Caco-2 (cell line): ENCODE measurements at regions of chr11 and their contacts with region 1.

Region 1: DNA sequence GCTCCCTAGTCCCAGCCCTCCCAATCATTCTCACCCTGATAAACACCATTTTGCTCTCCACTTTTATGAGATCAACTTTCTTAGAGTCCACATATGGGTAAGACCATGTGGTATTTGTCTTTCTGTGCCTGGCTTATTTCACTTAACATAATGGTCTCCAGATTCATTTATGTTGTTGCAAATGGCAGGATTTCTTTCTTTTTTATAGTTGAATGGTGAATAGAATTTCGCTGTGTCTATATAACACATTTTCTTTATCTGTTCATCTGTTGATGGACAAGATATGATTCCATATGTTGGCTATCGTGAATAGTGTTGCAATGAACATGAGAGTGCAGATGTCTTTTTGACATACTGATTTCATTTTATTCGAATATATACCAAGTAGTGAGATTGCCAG is 367.4 kb upstream of the ARHGAP42 start:
- DNase-seq: no peak
- H3K4me3 ChIP-seq: no peak overlapping the region
- H3K4me3 Mint-ChIP-seq: no peak overlapping the region
- H3K27ac Mint-ChIP-seq: no peak overlapping the region
- H3K4me1 ChIP-seq: no peaks in the 10 kb centered on the region
- H3K4me1 Mint-ChIP-seq: no peaks in the 10 kb centered on the region
- H3K27me3 ChIP-seq: no peaks in the 10 kb centered on the region
- H3K27me3 Mint-ChIP-seq: no peaks in the 10 kb centered on the region
- CTCF ChIP-seq: no peak

Region 2: GRCh38 chr11:100203789-100204188 is 115.9 kb before region 1 on chr11:
- CTCF ChIA-PET with region 1: no interaction called
- POLR2A ChIA-PET with region 1: no interaction called
- intact Hi-C with region 1: no loop called
- DNase-seq: no peak
- H3K4me3 ChIP-seq: no peak overlapping the region
- H3K4me3 Mint-ChIP-seq: no peak overlapping the region
- H3K27ac Mint-ChIP-seq: no peak overlapping the region
- H3K4me1 ChIP-seq: no peaks in the 10 kb centered on the region
- H3K4me1 Mint-ChIP-seq: peaks cover 5% of the 10 kb centered on the region
- H3K27me3 ChIP-seq: no peaks in the 10 kb centered on the region
- H3K27me3 Mint-ChIP-seq: peaks cover 5% of the 10 kb centered on the region
- CTCF ChIP-seq: no peak

Region 3: GRCh38 chr11:100367892-100368291 is 48.2 kb after region 1 on chr11:
- CTCF ChIA-PET with region 1: no interaction called
- POLR2A ChIA-PET with region 1: no interaction called
- intact Hi-C with region 1: loop called (anchors 5 kb)
- DNase-seq: no peak
- H3K4me3 ChIP-seq: no peak overlapping the region
- H3K4me3 Mint-ChIP-seq: no peak overlapping the region
- H3K27ac Mint-ChIP-seq: no peak overlapping the region
- H3K4me1 ChIP-seq: no peaks in the 10 kb centered on the region
- H3K4me1 Mint-ChIP-seq: no peaks in the 10 kb centered on the region
- H3K27me3 ChIP-seq: no peaks in the 10 kb centered on the region
- H3K27me3 Mint-ChIP-seq: no peaks in the 10 kb centered on the region
- CTCF ChIP-seq: no peak

Region 4: GRCh38 chr11:100501450-100501849 is 181.8 kb after region 1 on chr11:
- CTCF ChIA-PET with region 1: no interaction called
- POLR2A ChIA-PET with region 1: no interaction called
- intact Hi-C with region 1: no loop called
- DNase-seq: no peak
- H3K4me3 ChIP-seq: no peak overlapping the region
- H3K4me3 Mint-ChIP-seq: no peak overlapping the region
- H3K27ac Mint-ChIP-seq: no peak overlapping the region
- H3K4me1 ChIP-seq: no peaks in the 10 kb centered on the region
- H3K4me1 Mint-ChIP-seq: no peaks in the 10 kb centered on the region
- H3K27me3 ChIP-seq: no peaks in the 10 kb centered on the region; the same call in 1 of the 2 replicates
- H3K27me3 Mint-ChIP-seq: no peaks in the 10 kb centered on the region
- CTCF ChIP-seq: no peak